IMR-90 (cell line): ENCODE measurements at regions of chr5 and their contacts with region 1.

Region 1: DNA sequence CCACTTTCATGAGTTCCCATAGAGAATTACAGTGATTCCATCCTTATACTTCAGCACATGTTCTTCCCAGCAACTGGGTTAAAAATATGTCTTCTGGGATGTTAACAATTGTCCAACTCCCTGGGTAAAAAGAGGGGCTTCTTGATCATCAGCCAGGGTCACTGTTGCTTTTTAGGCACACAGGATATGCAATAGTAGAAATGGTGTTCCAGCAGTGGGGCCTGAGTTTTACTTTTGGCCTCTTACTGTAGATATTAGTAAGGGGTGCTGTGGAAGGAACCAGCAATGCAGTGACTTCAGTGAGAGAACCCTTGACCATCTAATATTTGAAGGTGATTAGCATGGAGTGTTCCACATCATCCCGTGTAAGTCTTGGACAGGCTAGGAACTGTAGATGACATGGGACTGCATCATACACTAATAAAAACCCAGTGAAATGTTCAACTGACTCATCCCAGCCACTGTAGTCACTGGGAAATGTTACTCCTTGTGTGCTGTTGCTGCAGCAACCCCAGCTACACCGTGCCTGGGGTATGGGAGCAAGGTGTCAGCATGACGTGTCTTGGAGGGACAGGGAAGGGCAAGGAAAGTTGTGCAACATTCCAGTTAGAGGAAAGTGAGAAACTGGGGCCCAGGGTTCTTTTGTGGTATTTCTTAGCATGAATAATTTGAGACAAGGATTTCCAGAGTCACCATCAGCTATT is 610.9 kb downstream of the RAB3C start:
- DNase-seq: peak; percentile 94
- ATAC-seq: peak; percentile 91
- H3K4me3 ChIP-seq: no peak overlapping the region
- H3K27ac ChIP-seq: no peak overlapping the region
- H3K4me1 ChIP-seq: no peaks in the 10 kb centered on the region
- H3K27me3 ChIP-seq: peaks cover 5% of the 10 kb centered on the region; the same call in 1 of the 2 replicates
- CTCF ChIP-seq: no peak
- POLR2A ChIP-seq: no peak
- RAD21 ChIP-seq: no peak

Region 2: GRCh38 chr5:58816181-58816731 is 377.5 kb before region 1 on chr5:
- CTCF ChIA-PET with region 1: no interaction called
- POLR2A ChIA-PET with region 1: no interaction called
- dilution Hi-C with region 1: no loop called
- in situ Hi-C with region 1: no loop called
- intact Hi-C with region 1: no loop called
- DNase-seq: no peak
- ATAC-seq: no peak
- H3K4me3 ChIP-seq: no peak overlapping the region
- H3K27ac ChIP-seq: no peak overlapping the region
- H3K4me1 ChIP-seq: no peaks in the 10 kb centered on the region
- H3K27me3 ChIP-seq: no peaks in the 10 kb centered on the region
- CTCF ChIP-seq: no peak
- POLR2A ChIP-seq: no peak
- RAD21 ChIP-seq: no peak

Region 3: DNA sequence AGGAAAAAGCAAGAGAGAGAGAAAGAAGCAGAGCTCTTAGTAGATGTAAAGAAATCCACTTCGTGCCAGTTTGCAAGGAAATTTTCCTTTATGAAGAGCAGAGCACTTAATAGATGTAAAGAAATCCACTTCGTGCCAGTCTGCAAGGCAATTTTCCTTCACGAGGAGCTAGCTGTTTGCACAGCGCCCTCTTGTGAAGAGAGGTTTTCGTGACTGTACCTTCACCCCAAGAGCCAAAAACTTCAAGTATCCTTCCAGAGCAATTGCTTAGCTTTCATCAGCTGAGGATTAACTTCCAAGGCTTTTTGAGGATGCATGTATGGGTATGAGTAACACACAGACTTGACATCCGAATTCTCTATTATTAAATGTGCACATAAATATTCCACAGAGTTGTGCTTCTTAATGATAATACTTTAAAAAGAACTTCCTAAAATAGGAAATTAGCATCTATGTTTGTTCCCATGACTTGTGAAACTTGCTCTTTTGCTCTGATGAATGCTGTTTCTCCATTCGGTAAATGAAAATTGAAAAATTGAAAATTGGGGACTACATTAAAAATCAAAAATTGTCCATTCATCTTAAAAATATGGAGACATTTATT is 174.1 kb after region 1 on chr5:
- CTCF ChIA-PET with region 1: interaction called, 27 read pairs
- POLR2A ChIA-PET with region 1: no interaction called
- dilution Hi-C with region 1: loop called (anchors 25 kb)
- in situ Hi-C with region 1: loop called (anchors 5 kb)
- intact Hi-C with region 1: loop called (anchors 1 kb)
- DNase-seq: peak; percentile 66
- ATAC-seq: peak; percentile 70
- H3K4me3 ChIP-seq: no peak overlapping the region
- H3K27ac ChIP-seq: no peak overlapping the region
- H3K4me1 ChIP-seq: no peaks in the 10 kb centered on the region
- H3K27me3 ChIP-seq: peaks cover 15% of the 10 kb centered on the region
- CTCF ChIP-seq: peak; percentile 74
- POLR2A ChIP-seq: no peak
- RAD21 ChIP-seq: peak; percentile 68